Activated CD4-positive, alpha-beta T cell treated with anti-CD3 and anti-CD28 coated beads, Interleukin-2, amount 10 ng/mL, durations not matched to agents 24 days and 14 days (primary cell): ENCODE measurements at regions of chr19 and their contacts with region 1.

Region 1: DNA sequence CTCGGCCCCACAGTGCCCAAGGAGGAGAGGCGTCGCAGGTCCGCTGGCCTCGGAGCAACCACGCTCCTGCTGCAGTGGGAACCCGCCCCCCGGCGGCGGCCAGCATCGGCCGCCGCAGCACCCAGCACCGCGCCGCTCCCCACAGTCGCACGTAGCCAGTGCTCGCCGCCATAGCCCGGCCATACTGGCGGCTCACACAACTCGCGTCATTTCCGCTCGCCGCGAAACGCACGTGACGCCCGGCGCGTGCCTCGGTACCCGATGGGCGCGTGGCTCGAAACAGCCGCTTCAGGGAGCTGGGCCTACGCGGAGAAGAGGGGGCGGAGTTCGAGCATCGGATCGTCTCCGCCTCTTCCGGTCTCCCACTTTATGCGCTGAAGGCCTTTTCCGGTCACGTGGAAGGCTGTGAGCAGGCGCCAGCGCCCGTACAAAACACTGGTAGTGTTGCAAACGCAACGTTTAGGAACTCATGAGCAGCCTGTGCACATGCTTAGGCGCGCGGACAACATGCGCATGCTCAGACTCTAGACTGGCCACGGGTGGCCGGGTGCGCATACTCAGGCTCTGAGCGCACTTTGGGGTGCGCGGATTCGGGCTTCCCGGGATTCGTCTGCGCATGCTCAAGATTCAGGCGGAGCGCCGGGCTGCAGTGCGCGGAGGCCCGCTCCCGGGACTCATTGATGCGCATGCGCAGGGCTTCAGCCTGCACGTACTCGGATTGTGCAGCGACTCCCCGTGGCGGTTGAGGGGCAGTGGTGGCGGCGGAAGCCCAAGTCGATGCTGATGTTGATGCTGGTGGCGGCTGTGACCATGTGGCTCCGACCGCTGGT is at the starts of genes CATSPERD and LONP1:
- DNase-seq: peak; percentile 99
- H3K4me3 Mint-ChIP-seq: peak within 1 kb of the TSS; percentile 97
- H3K27ac Mint-ChIP-seq: peak within 1 kb of the TSS; percentile 97
- H3K4me1 Mint-ChIP-seq: peaks cover 25% of the 10 kb centered on the region
- H3K27me3 Mint-ChIP-seq: no peaks in the 10 kb centered on the region
- total RNA-seq, gene CATSPERD: not detected in 2 replicates
- total RNA-seq, gene LONP1: 220 and 240 TPM in 2 replicates

Region 2: DNA sequence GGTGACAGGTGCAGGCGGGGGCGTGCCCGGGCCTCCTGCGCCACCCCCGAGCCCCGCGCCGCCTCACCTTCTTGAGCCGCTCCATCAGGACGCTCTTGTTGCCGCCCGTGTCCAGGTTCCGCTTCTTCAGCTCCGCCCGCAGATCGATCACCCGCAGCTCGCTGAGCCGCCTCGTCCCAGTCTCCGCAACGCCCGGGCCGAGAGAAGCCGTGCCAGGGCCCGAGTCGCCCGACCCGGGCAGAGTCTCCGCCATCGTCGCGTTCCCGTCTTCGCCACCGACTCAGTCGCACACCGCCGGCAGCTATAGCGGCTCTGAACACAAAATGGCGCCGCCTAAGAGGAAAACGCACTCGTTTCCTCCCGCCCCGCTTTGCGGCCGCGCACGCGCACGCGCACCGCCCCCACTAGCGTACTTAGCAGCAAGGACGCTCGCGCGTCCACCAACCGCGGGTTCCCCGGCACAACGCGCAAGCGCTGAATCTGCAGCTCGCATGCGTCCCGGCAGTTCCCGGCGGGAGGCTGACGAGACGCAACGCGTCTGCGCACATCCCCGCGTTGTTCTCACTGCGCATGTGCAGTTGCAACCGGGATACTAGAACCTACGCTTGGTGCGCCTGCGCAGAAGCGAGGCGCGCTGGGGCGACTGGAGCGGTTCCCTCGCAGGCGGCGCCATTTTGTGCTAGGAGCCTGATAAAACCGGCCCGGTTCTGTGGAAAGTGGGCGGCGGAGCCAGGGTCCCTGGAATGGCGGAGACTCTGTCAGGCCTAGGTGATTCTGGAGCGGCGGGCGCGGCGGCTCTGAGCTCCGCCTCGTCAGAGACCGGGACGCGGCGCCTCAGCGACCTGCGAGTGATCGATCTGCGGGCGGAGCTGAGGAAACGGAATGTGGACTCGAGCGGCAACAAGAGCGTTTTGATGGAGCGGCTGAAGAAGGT is 97.4 kb before region 1 on chr19 and contains the starts of genes SAFB and SAFB2:
- intact Hi-C with region 1: loop called (anchors 1 kb)
- DNase-seq: peak; percentile 100
- H3K4me3 Mint-ChIP-seq: peak within 1 kb of the TSS; percentile 100
- H3K27ac Mint-ChIP-seq: peak within 1 kb of the TSS; percentile 100
- H3K4me1 Mint-ChIP-seq: peaks cover 55% of the 10 kb centered on the region
- H3K27me3 Mint-ChIP-seq: peaks cover 3% of the 10 kb centered on the region
- total RNA-seq, gene SAFB: 142 and 143 TPM in 2 replicates
- total RNA-seq, gene SAFB2: 97.6 and 101 TPM in 2 replicates

Region 3: GRCh38 chr19:5680437-5681368 is 39.5 kb before region 1 on chr19 and contains the starts of genes HSD11B1L and MICOS13:
- intact Hi-C with region 1: loop called (anchors 1 kb)
- DNase-seq: peak; percentile 99
- H3K4me3 Mint-ChIP-seq: peak within 1 kb of the TSS; percentile 99
- H3K27ac Mint-ChIP-seq: peak within 1 kb of the TSS; percentile 97
- H3K4me1 Mint-ChIP-seq: peaks cover 22% of the 10 kb centered on the region
- H3K27me3 Mint-ChIP-seq: peaks cover 7% of the 10 kb centered on the region
- total RNA-seq, gene HSD11B1L: 2.2 and 2.6 TPM in 2 replicates
- total RNA-seq, gene MICOS13: 56.2 and 63.4 TPM in 2 replicates

Region 4: DNA sequence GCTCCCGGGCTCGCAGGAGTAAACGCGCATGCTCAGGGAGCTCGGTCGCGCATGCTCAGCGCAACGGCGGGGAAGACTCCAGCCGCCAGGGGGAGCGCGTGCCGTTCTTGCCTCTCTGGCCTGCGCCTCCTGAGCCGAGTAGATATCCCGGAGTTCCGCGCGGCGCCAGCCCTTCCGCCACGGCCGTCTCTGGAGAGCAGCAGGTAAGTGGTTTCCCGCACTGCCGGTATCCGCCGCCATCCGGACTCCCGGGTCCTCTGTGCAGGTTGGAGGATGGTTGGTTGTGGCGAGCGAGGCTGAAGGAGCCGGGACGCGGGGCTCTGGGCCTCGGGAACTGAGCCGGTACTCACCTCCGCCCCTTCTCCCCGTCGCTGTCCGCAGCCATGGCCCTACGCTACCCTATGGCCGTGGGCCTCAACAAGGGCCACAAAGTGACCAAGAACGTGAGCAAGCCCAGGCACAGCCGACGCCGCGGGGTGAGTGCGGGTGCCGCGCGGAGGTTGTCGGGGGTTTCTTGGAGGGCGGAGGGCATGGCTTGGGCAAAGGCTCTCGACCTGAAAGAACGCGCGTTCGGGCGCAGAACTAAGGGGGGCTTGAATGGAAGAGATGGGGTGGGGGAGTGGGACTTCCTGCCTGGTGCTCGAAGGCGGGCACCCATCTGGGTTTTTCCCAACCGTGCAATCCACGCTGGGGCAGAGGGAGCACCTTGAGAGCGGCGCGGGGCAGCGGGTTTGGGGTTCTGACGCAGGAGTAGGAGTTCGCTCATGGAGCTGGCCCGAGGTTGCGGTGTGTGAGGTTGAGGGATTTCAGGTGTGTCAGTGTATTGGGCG is 29.8 kb before region 1 on chr19 and contains the start of gene RPL36:
- intact Hi-C with region 1: loop called (anchors 1 kb)
- DNase-seq: peak; percentile 100
- H3K4me3 Mint-ChIP-seq: peak within 1 kb of the TSS; percentile 100
- H3K27ac Mint-ChIP-seq: peak within 1 kb of the TSS; percentile 98
- H3K4me1 Mint-ChIP-seq: peaks cover 23% of the 10 kb centered on the region
- H3K27me3 Mint-ChIP-seq: no peaks in the 10 kb centered on the region
- total RNA-seq, gene RPL36: 1,117 and 1,132 TPM in 2 replicates